Kidney (tissue), 22 donors: ENCODE measurements at regions of chr1 and their contacts with region 1.

Region 1: GRCh38 chr1:157487096-157487495 is 65.2 kb downstream of the FCRL5 start:
- DNase-seq: no peak
- H3K4me3 ChIP-seq: no peak overlapping the region
- H3K27ac ChIP-seq: no peak overlapping the region
- H3K4me1 ChIP-seq: no peaks in the 10 kb centered on the region
- H3K27me3 ChIP-seq: no peaks in the 10 kb centered on the region
- CTCF ChIP-seq: no peak

Region 2: DNA sequence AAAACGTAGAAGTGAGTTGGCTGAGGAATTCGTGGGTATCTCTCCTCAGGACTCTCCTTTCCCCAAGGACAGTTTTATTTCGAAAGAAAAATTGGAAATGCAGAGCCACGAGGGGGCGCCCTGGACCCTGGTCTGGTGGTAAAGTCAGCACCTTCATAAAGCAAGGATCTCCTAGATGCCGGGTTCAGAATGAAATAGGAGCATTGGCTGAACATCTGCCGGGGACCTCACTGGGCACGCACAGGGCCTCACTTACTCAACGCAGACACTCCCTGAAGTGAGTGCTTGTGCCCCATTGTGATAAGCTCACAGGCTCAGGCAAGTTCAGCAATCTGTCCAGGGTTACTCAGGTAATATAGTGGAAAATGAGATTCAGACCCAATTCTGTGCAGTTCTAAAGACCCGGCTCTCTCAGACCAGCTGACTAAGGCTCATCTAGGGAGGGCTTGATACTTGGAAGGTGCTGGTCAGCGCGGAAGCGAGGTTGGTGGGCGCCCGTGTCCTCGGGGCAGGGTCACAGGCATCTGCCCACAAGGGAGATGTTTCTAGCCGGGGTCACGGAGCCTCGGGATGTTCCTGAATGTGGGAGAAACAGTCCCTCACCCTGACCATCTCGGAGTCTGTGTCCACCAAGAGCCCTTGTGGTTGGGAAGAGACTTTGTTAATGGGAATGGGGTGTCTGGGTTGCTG is 293.2 kb before region 1 on chr1:
- intact Hi-C with region 1: loop called (anchors 10 kb)
- DNase-seq: peak in 4 of 5 donors; percentile 74 to 80 (median 79)
- H3K4me3 ChIP-seq: no peak overlapping the region
- H3K27ac ChIP-seq: no peak overlapping the region
- H3K4me1 ChIP-seq: no peaks in the 10 kb centered on the region
- H3K27me3 ChIP-seq: peaks cover 6% of the 10 kb centered on the region
- CTCF ChIP-seq: peak; percentile 65

Region 3: GRCh38 chr1:157369808-157370521 is 117.1 kb before region 1 on chr1:
- intact Hi-C with region 1: loop called (anchors 10 kb)
- DNase-seq: peak in 4 of 5 donors; percentile 63 to 75 (median 67)
- H3K4me3 ChIP-seq: no peak overlapping the region
- H3K27ac ChIP-seq: no peak overlapping the region
- H3K4me1 ChIP-seq: no peaks in the 10 kb centered on the region
- H3K27me3 ChIP-seq: no peaks in the 10 kb centered on the region
- CTCF ChIP-seq: peak; percentile 78